ENCODE measurements at regions of chr15 and their contacts with region 1.

Region 1: DNA sequence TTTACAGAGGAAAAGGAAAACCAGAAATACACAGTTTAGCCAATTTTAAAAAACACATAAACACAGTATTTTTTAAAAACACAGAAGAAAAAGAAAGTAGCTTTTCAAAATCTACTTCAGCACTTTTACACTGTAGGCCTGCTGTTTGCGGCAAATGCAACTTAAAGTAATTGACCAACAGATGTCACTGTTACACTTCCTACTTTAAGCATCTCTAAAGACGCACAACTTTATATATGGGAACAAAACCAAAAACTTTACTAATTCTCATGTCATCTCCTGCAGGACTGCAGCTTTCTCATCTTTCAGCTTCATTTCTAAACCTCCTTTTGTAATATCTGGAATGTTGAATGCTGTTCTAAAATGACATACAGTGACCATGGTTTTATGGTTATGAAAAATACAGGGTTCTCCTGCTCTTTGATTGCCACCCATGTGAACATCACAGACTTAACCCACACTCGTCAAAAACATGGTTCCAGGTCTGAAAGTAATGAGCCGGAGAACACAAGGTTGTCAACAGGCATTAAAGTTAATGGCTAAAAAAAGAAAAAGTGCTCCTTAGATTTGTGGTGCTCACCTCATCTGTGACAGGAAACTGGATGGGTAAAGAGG is 107.9 kb downstream of the FMN1 start:
- DNase-seq: no peak
- H3K4me3 ChIP-seq: no peak overlapping the region
- H3K27ac ChIP-seq: no peak overlapping the region
- H3K27me3 ChIP-seq: no peaks in the 10 kb centered on the region
- CTCF ChIP-seq: peak; percentile 70

Region 2: DNA sequence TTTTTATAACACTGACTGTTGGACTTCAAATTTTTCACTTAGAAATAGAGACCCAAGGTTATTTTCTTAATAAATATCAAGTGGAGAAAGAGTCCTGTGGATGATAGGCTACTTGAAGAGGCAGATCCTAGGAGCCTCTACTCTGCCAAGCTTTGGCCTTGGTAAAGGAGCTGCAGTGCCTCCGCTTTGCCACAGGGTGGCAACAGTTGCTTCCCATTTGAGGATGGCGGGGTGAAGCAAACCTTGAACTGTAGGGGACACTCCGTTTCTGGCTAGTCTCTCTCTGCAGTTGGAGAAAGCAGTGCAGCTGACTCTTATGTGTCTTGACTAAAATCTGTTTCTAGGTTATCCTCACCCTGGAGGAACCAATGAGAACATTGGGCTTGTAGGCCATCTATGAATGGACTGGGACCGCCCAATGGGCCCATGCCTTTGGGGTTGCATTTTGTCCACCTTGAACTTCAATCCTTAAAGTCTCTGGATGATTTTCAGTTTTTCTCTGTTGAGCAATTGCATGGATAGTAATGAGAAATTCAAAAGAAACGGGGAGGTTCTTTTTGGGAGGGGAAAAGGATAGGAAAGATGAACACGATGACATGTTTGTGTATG is 435.3 kb before region 1 on chr15:
- CTCF ChIA-PET with region 1: interaction called, 17 read pairs
- POLR2A ChIA-PET with region 1: no interaction called
- DNase-seq: peak; percentile 38
- H3K4me3 ChIP-seq: no peak overlapping the region
- H3K27ac ChIP-seq: no peak overlapping the region
- H3K27me3 ChIP-seq: no peaks in the 10 kb centered on the region
- CTCF ChIP-seq: peak; percentile 98

Region 3: GRCh38 chr15:32956006-32956405 is 130.6 kb before region 1 on chr15:
- CTCF ChIA-PET with region 1: no interaction called
- POLR2A ChIA-PET with region 1: no interaction called
- DNase-seq: peak; percentile 81
- H3K4me3 ChIP-seq: no peak overlapping the region
- H3K27ac ChIP-seq: no peak overlapping the region
- H3K27me3 ChIP-seq: no peaks in the 10 kb centered on the region
- CTCF ChIP-seq: peak; percentile 79

Region 4: GRCh38 chr15:33074942-33075341 is 11.7 kb before region 1 on chr15:
- CTCF ChIA-PET with region 1: interaction called, 20 read pairs
- POLR2A ChIA-PET with region 1: no interaction called
- DNase-seq: no peak
- H3K4me3 ChIP-seq: no peak overlapping the region
- H3K27ac ChIP-seq: no peak overlapping the region
- H3K27me3 ChIP-seq: no peaks in the 10 kb centered on the region
- CTCF ChIP-seq: no peak

Region 5: DNA sequence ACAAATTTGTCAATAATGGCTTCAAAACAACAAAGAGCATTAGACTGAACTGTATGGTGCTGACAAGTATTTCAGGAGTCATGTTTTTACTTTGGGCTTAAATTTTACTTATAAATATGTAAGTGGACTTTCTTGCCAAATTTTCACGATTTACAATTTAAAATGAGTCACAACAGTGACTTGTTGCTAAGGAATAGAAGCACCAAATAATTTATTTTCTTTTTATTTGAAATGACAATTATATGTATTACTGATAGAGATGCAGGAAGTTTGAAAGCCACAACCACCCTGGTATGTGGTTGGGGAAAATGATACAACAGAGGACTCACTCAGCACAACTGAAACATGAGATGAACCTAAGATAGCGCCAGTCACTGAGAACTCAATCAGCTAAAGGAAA is 17.6 kb after region 1 on chr15:
- CTCF ChIA-PET with region 1: interaction called, 16 read pairs
- POLR2A ChIA-PET with region 1: no interaction called
- DNase-seq: no peak
- H3K4me3 ChIP-seq: no peak overlapping the region
- H3K27ac ChIP-seq: no peak overlapping the region
- H3K27me3 ChIP-seq: no peaks in the 10 kb centered on the region
- CTCF ChIP-seq: no peak

Region 6: DNA sequence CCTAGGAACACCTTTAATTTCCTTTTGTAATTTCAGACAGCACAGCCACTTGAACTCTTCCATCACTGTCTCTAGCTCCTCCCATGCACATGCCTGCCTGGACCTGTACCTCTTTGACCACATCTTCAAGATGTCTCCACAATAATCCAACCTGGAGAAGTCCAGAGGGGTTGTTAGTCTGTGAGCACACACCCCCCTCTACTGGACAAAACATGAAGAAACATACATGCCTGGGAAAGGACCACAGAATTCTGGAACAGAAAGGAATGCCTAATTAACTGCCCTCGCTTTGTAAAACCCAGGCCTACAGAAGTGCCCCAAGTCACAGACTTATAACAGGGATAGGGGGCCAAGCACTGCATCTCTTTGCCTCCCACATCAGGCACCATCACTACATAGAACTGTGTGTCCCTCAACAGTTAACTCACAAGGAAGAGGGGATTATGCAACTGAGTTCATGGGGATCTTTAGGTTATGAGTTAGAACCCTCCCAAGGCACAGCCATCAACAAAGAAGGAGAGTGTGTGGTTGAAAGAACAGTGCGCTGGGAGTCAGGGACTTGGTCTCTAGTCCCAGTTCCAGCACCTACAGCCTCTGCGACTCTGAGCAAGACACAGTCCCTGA is 46.2 kb after region 1 on chr15:
- CTCF ChIA-PET with region 1: interaction called, 290 read pairs
- POLR2A ChIA-PET with region 1: interaction called, 9 read pairs
- DNase-seq: peak; percentile 61
- H3K4me3 ChIP-seq: no peak overlapping the region
- H3K27ac ChIP-seq: no peak overlapping the region
- H3K27me3 ChIP-seq: no peaks in the 10 kb centered on the region
- CTCF ChIP-seq: peak; percentile 89

Region 7: GRCh38 chr15:33700695-33701304 is 614.2 kb after region 1 on chr15:
- CTCF ChIA-PET with region 1: interaction called, 13 read pairs
- POLR2A ChIA-PET with region 1: no interaction called
- DNase-seq: peak; percentile 68
- H3K4me3 ChIP-seq: no peak overlapping the region
- H3K27ac ChIP-seq: no peak overlapping the region
- H3K27me3 ChIP-seq: peaks cover 8% of the 10 kb centered on the region
- CTCF ChIP-seq: peak; percentile 95

Measured in AG04450 (cell line).